ENCODE measurements at regions of chr11 and their contacts with region 1.

Region 1: DNA sequence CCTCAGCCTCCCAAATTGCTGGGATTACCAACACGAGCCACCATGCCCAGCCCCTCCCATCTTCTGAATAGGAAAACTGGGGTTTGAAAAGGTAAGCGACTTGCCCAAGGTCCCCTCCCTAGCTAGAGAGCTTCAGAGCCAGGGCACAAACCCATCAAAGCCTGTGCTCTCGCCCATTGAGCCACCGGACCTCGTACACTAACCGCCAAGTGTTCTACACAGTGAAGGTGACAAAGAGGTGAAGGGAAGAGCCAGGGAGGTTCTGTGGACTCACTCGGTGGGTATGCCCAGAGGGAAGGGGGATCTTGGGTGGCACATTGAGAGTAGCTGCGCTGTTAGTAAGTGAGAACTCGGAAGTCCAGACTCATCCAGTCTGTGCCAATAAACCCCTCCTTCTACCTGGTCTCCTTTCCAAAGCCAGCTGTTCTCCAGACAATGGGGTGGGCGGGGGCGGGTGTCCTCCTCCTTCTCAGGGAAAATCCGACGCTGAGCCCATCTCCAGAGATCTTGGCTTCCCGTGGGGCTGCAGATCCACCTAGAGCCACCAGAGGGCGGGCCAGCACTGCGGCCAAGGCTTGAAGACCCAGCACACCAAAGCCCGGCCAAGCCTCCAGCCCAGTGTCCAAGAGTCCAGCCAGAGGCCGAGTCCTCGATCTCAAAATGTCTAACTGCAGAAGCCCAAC is 3.2 kb upstream of the RTN4RL2 start:
- DNase-seq: peak; percentile 86
- ATAC-seq: peak; percentile 70
- H3K4me3 ChIP-seq: no peak overlapping the region
- H3K4me3 Mint-ChIP-seq: peak overlapping the region; percentile 67
- H3K27ac ChIP-seq: no peak overlapping the region
- H3K27ac Mint-ChIP-seq: no peak overlapping the region
- H3K4me1 ChIP-seq: peaks cover 37 to 41% of the 10 kb centered on the region in 2 donors
- H3K4me1 Mint-ChIP-seq: peaks cover 26% of the 10 kb centered on the region
- H3K27me3 ChIP-seq: peaks cover 0 to 51% (median 28%) of the 10 kb centered on the region in 4 experiments
- H3K27me3 Mint-ChIP-seq: peaks cover 48% of the 10 kb centered on the region
- CTCF ChIP-seq: peak; percentile 97

Region 2: GRCh38 chr11:57345555-57346211 is 111.4 kb before region 1 on chr11:
- CTCF ChIA-PET with region 1: interaction called, 19 read pairs
- POLR2A ChIA-PET with region 1: no interaction called
- intact Hi-C with region 1: no loop called
- DNase-seq: peak; percentile 78
- ATAC-seq: peak; percentile 82
- H3K4me3 ChIP-seq: no peak overlapping the region
- H3K4me3 Mint-ChIP-seq: no peak overlapping the region
- H3K27ac ChIP-seq: no peak overlapping the region
- H3K27ac Mint-ChIP-seq: no peak overlapping the region
- H3K4me1 ChIP-seq: peaks cover 0 to 6% of the 10 kb centered on the region in 2 donors
- H3K4me1 Mint-ChIP-seq: peaks cover 6% of the 10 kb centered on the region
- H3K27me3 ChIP-seq: no peaks in the 10 kb centered on the region
- H3K27me3 Mint-ChIP-seq: peaks cover 8% of the 10 kb centered on the region
- CTCF ChIP-seq: peak; percentile 82

Region 3: GRCh38 chr11:57438345-57439285 is 18.5 kb before region 1 on chr11:
- CTCF ChIA-PET with region 1: interaction called, 28 read pairs
- POLR2A ChIA-PET with region 1: no interaction called
- intact Hi-C with region 1: no loop called
- DNase-seq: no peak
- ATAC-seq: no peak
- H3K4me3 ChIP-seq: no peak overlapping the region
- H3K4me3 Mint-ChIP-seq: no peak overlapping the region
- H3K27ac ChIP-seq: no peak overlapping the region
- H3K27ac Mint-ChIP-seq: no peak overlapping the region
- H3K4me1 ChIP-seq: no peaks in the 10 kb centered on the region
- H3K4me1 Mint-ChIP-seq: no peaks in the 10 kb centered on the region
- H3K27me3 ChIP-seq: no peaks in the 10 kb centered on the region
- H3K27me3 Mint-ChIP-seq: peaks cover 6% of the 10 kb centered on the region
- CTCF ChIP-seq: no peak

Region 4: DNA sequence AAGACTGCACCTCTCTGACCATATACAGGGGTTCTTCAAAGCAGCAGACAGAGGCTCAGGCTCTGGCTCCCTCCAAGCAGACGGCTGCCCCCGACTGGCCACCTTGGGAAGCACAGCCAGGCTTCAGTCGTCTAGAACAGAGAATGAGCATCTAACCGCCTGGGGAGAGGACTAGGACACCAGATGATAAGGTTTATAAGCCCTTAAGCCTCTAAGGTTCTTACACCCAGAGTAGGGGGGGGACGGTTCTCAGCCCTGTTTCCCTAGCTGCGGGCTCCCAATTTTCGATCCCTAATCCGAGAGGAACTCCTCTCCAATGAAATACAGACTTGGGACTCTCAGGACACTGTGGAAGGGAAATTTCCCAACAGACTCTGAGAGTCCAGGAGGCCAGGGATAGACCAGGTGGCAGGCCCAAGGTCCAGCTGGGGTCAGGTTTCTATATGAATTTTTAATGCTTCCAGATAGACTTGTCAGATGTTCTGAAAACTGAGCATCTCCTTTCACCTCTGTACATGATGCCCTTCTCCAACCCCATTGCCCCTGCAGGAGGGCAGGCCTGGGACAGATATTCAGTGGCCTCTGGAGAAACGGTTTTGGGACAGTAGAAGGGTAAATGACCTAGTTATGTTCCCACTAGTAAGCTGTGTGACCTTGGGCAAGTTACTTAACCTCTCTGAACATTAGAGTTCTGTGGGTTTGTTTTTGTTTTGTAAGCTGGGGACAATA is 23.5 kb after region 1 on chr11:
- CTCF ChIA-PET with region 1: interaction called, 148 read pairs
- POLR2A ChIA-PET with region 1: interaction called, 4 read pairs
- intact Hi-C with region 1: loop called (anchors 1 kb)
- DNase-seq: peak; percentile 52
- ATAC-seq: peak; percentile 22
- H3K4me3 ChIP-seq: no peak overlapping the region
- H3K4me3 Mint-ChIP-seq: peak overlapping the region; percentile 61
- H3K27ac ChIP-seq: no peak overlapping the region
- H3K27ac Mint-ChIP-seq: no peak overlapping the region
- H3K4me1 ChIP-seq: peaks cover 46 to 53% of the 10 kb centered on the region in 2 donors
- H3K4me1 Mint-ChIP-seq: peaks cover 60% of the 10 kb centered on the region
- H3K27me3 ChIP-seq: peaks cover 0 to 22% (median 9%) of the 10 kb centered on the region in 4 experiments
- H3K27me3 Mint-ChIP-seq: peaks cover 5% of the 10 kb centered on the region
- CTCF ChIP-seq: peak; percentile 63

Region 5: GRCh38 chr11:57515332-57516060 is 58.4 kb after region 1 on chr11 and contains the start of gene SLC43A1:
- CTCF ChIA-PET with region 1: interaction called, 33 read pairs
- POLR2A ChIA-PET with region 1: interaction called, 7 read pairs
- intact Hi-C with region 1: no loop called
- DNase-seq: peak; percentile 46
- ATAC-seq: peak; percentile 34
- H3K4me3 ChIP-seq: peak within 1 kb of the TSS; percentile 57 to 93 (median 81)
- H3K4me3 Mint-ChIP-seq: peak within 1 kb of the TSS; percentile 97
- H3K27ac ChIP-seq: peak within 1 kb of the TSS in 1 of 2 donors; percentile 34
- H3K27ac Mint-ChIP-seq: peak within 1 kb of the TSS; percentile 73
- H3K4me1 ChIP-seq: peaks cover 6 to 22% of the 10 kb centered on the region in 2 donors
- H3K4me1 Mint-ChIP-seq: peaks cover 30% of the 10 kb centered on the region
- H3K27me3 ChIP-seq: no peaks in the 10 kb centered on the region
- H3K27me3 Mint-ChIP-seq: no peaks in the 10 kb centered on the region
- CTCF ChIP-seq: no peak
- total RNA-seq, gene SLC43A1: 3.7 and 5.9 TPM in 2 replicates

Region 6: DNA sequence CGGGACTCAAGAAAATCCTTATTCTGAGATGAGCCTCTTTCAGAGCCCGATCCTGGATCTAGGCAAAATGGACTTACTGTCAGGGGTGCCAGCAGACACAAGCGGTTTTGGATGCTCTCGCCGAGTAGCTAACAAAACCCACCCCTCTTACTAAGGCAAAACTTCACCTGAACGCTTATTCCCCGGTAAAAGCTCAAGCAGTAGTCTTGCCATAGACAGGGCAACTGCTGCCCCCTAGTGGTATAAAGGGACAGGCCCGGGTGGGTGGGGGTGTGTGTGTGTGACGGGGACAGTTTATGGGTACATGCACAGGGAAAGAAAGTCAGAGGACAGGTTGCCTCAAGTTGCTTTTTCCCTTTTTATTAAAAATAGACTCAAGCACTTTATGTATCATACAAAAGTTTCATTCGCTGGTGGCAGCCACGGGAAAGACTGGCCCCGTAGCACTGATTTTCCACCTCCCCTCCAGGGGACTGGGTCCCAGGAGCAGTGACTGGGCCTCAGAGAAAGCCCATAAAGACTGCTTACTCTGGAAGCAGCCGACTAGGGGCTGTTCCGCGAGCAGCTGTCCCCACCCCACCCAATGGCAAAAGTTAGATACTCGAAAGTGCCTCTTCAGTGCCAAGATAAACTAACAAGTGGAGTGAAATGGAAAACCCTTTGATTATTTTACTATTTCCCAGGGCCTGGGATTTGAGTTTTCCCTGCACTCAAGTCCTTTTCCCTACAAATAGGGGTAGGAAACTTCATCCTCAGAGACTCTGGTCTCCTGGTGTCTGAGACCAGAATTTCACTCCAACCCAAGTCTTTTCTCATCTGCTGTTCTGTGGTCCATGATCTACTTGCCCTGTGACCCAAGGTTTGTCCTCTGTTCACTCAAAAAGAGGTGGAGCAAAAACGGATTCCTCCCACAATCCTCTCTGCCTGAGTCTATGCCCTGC is 187.9 kb after region 1 on chr11:
- CTCF ChIA-PET with region 1: interaction called, 82 read pairs
- POLR2A ChIA-PET with region 1: no interaction called
- intact Hi-C with region 1: loop called (anchors 1 kb)
- DNase-seq: peak; percentile 85
- ATAC-seq: peak; percentile 71
- H3K4me3 ChIP-seq: no peak overlapping the region
- H3K4me3 Mint-ChIP-seq: no peak overlapping the region
- H3K27ac ChIP-seq: no peak overlapping the region
- H3K27ac Mint-ChIP-seq: no peak overlapping the region
- H3K4me1 ChIP-seq: peaks cover 43 to 46% of the 10 kb centered on the region in 2 donors
- H3K4me1 Mint-ChIP-seq: peaks cover 40% of the 10 kb centered on the region
- H3K27me3 ChIP-seq: peaks cover 0 to 58% (median 47%) of the 10 kb centered on the region in 4 experiments
- H3K27me3 Mint-ChIP-seq: peaks cover 70% of the 10 kb centered on the region
- CTCF ChIP-seq: peak; percentile 81

Measured in B cell (primary cell).